GM12878 (cell line): ENCODE measurements at regions of chr7 and their contacts with region 1.

Region 1: GRCh38 chr7:35801392-35802101 is 690 bp downstream of the SEPTIN7 start:
- DNase-seq: no peak
- ATAC-seq: peak; percentile 55
- H3K4me3 ChIP-seq: peak overlapping the region; percentile 95
- H3K27ac ChIP-seq: peak overlapping the region; percentile 99
- H3K4me1 ChIP-seq: peaks cover 11% of the 10 kb centered on the region; the same call in 1 of the 2 replicates
- H3K27me3 ChIP-seq: no peaks in the 10 kb centered on the region
- CTCF ChIP-seq: peak; percentile 38 to 48 (median 40)
- EP300 ChIP-seq: no peak
- POLR2A ChIP-seq: peak; percentile 71
- RAD21 ChIP-seq: peak; percentile 31; the same call in 1 of the 2 replicates

Region 2: DNA sequence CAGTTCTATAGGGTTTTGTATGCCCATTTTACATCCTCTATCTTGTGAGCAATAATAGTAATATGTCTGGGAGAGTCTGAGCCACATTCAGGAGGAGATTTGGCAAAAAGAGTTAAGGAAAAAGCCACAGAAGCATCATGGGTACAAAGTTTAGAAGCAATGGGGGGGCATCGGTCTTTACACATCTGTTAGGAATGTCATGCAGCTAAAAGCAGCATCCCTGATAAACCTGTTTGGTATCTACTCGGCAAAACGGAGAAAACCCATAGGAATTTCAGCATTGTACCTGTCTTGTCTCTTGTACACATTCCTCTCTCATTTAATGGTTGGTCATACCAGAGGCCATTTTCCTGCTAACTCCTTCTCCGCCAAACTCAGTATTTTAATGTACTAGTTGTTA is 94.1 kb before region 1 on chr7:
- CTCF ChIA-PET with region 1: interaction called, 13 read pairs
- POLR2A ChIA-PET with region 1: interaction called, 9 read pairs
- RAD21 ChIA-PET with region 1: interaction called, 31 read pairs
- SMC1A ChIA-PET with region 1: interaction called, 76 read pairs
- in situ Hi-C with region 1: no loop called
- intact Hi-C with region 1: loop called (anchors 1 kb)
- DNase-seq: no peak
- ATAC-seq: no peak
- H3K4me3 ChIP-seq: no peak overlapping the region
- H3K27ac ChIP-seq: no peak overlapping the region
- H3K4me1 ChIP-seq: peaks cover 5% of the 10 kb centered on the region; the same call in 1 of the 2 replicates
- H3K27me3 ChIP-seq: no peaks in the 10 kb centered on the region
- CTCF ChIP-seq: no peak
- EP300 ChIP-seq: no peak
- POLR2A ChIP-seq: no peak
- RAD21 ChIP-seq: no peak

Region 3: DNA sequence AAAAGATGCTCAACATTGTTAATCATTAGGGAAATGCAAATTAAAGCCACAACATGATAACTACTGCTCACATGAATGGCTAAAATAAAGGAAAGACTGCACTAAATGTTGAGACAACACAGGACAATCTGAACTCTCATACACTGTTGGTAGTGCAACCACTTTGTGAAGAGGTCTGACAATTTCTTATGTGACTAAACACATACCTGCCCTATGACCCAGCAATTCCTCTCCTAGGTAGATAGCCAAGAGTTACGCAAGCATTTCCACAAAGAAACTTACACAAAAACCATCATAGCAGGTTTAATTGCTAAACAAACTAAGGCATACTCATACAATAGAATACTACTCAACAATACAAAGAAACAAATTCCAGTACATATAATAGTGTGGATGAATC is 64.8 kb before region 1 on chr7:
- CTCF ChIA-PET with region 1: interaction called, 5 read pairs
- POLR2A ChIA-PET with region 1: interaction called, 7 read pairs
- RAD21 ChIA-PET with region 1: interaction called, 273 read pairs
- SMC1A ChIA-PET with region 1: interaction called, 9 read pairs
- in situ Hi-C with region 1: loop called (anchors 5 kb)
- intact Hi-C with region 1: no loop called
- DNase-seq: no peak
- ATAC-seq: peak; percentile 39; the same call in 2 of the 3 replicates
- H3K4me3 ChIP-seq: no peak overlapping the region
- H3K27ac ChIP-seq: no peak overlapping the region
- H3K4me1 ChIP-seq: no peaks in the 10 kb centered on the region
- H3K27me3 ChIP-seq: no peaks in the 10 kb centered on the region
- CTCF ChIP-seq: no peak
- EP300 ChIP-seq: no peak
- POLR2A ChIP-seq: no peak
- RAD21 ChIP-seq: no peak

Region 4: GRCh38 chr7:35828817-35829216 is 27.3 kb after region 1 on chr7:
- CTCF ChIA-PET with region 1: interaction called, 5 read pairs
- POLR2A ChIA-PET with region 1: interaction called, 7 read pairs
- RAD21 ChIA-PET with region 1: interaction called, 7 read pairs
- SMC1A ChIA-PET with region 1: interaction called, 11 read pairs
- in situ Hi-C with region 1: no loop called
- intact Hi-C with region 1: no loop called
- DNase-seq: no peak
- ATAC-seq: no peak
- H3K4me3 ChIP-seq: no peak overlapping the region
- H3K27ac ChIP-seq: no peak overlapping the region
- H3K4me1 ChIP-seq: no peaks in the 10 kb centered on the region
- H3K27me3 ChIP-seq: no peaks in the 10 kb centered on the region
- CTCF ChIP-seq: no peak
- EP300 ChIP-seq: no peak
- POLR2A ChIP-seq: no peak
- RAD21 ChIP-seq: no peak

Region 5: DNA sequence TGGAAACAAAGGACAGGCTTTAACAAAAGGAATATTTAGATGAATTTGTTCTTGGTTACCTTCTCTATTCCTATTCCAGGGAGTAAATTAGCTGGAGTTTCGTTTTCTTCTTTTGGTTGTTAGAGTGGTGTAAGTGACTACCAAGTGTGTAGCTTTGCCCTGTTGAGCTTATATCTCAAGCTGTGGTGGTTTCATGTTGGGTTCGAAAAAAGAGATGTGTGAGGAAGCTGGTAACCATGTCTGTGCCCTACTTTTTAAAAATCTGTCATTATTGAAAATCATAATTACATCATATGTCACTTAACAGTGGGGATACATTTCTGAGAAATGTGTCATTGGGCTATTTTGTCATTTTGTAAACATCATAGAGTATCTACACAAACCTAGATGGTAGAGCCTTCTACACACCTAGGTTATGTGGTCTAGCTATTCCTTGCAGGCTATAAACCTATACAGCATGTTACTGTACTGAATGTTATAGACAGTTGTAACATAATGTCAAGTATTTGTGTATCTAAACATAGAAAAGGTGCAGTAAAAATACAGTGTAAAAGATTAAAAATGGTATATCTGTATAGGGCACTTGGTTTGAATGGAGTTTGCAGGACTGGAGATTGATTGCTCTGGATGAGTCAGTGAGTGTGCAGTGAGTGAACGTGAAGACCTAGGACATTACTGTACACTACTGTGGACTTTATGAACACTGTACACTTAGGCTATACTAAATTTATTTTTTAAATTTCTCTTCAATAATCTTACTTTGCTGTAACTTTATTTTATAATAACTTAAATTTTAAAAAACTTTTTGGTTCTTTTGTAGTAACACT is 89.7 kb after region 1 on chr7:
- CTCF ChIA-PET with region 1: interaction called, 10 read pairs
- POLR2A ChIA-PET with region 1: interaction called, 5 read pairs
- RAD21 ChIA-PET with region 1: interaction called, 5 read pairs
- SMC1A ChIA-PET with region 1: interaction called, 4 read pairs
- in situ Hi-C with region 1: no loop called
- intact Hi-C with region 1: no loop called
- DNase-seq: no peak
- ATAC-seq: no peak
- H3K4me3 ChIP-seq: no peak overlapping the region
- H3K27ac ChIP-seq: no peak overlapping the region
- H3K4me1 ChIP-seq: no peaks in the 10 kb centered on the region
- H3K27me3 ChIP-seq: no peaks in the 10 kb centered on the region
- CTCF ChIP-seq: no peak
- EP300 ChIP-seq: no peak
- POLR2A ChIP-seq: no peak
- RAD21 ChIP-seq: no peak